ENCODE measurements at regions of chr3 and their contacts with region 1.

Region 1: DNA sequence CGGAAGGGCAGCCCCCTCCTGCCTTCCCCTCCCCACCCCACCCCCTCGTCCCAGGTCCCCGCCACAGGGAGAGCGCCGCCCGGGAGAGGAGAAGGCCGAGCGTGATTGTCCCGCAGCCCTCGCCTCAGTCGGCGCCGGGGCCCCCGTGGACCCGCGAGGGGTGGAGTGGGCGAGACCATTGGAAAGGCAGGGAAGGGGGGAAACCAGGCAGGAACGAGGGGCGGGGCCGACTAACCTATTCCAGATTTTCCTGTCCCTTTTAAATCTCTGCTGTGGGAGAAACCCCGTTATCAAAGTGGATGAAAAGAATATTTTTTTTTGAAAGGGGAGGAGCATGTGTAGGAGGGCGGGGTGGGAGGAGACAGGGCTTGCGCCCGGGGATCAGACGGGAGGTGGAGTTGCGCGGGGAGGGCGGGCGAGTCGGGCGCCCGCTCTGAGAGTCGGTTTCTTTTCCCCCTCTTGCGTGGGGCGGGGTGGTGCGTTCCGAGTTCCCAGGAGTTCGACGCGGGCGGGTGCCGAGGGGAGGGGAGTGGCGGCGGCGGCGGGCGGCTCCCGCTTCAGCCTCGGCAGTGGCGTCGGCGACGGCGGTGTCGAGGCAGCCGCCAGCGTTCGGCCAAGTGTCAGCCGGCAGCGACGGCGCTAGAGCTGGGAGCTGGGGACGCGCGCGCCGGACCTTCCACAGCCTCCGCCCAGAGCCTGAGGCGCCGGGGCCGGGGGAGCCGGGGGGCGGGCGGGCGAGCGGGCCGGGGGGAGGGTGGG is at the start of gene NECTIN3:
- DNase-seq: peak; percentile 59 to 89 (median 80)
- ATAC-seq: peak; percentile 96
- H3K4me3 ChIP-seq: peak within 1 kb of the TSS; percentile 76
- H3K4me3 Mint-ChIP-seq: peak within 1 kb of the TSS; percentile 90 to 98 (median 94)
- H3K27ac ChIP-seq: peak within 1 kb of the TSS; percentile 52
- H3K27ac Mint-ChIP-seq: peak within 1 kb of the TSS; percentile 63 to 91 (median 87)
- H3K4me1 ChIP-seq: peaks cover 9% of the 10 kb centered on the region in 2 donors
- H3K4me1 Mint-ChIP-seq: peaks cover 24 to 34% (median 26%) of the 10 kb centered on the region in 7 donors
- H3K27me3 ChIP-seq: peaks cover 0 to 6% of the 10 kb centered on the region in 2 donors
- H3K27me3 Mint-ChIP-seq: peaks cover 29 to 64% (median 36%) of the 10 kb centered on the region in 5 donors
- total RNA-seq, gene NECTIN3: 2.4 to 7.2 (median 4.6) TPM

Region 2: DNA sequence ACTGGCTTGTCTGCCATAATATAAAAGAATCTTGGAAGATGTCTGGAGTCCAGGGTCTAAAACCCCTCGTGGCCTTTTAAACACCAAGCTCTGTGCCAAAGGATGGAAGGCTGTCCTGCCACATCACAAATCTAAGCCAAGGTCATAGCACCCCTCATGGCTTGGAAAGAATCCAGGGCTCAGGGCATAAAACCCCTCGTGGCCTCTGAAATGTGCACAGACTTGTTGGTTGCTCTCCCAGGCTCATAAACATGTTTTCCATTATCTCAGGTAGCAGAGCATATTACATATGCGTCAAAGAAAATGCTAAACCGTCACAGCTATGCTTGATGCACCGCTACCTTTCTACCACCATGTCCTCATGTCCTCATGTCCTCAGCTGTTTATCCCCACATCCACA is 16.6 kb before region 1 on chr3:
- CTCF ChIA-PET with region 1: no interaction called
- POLR2A ChIA-PET with region 1: no interaction called
- intact Hi-C with region 1: loop called in 1 of 2 experiments (anchors 1 kb)
- DNase-seq: no peak
- ATAC-seq: no peak
- H3K4me3 ChIP-seq: no peak overlapping the region
- H3K4me3 Mint-ChIP-seq: no peak overlapping the region
- H3K27ac ChIP-seq: no peak overlapping the region
- H3K27ac Mint-ChIP-seq: no peak overlapping the region
- H3K4me1 ChIP-seq: no peaks in the 10 kb centered on the region
- H3K4me1 Mint-ChIP-seq: no peaks in the 10 kb centered on the region
- H3K27me3 ChIP-seq: no peaks in the 10 kb centered on the region
- H3K27me3 Mint-ChIP-seq: peaks cover 0 to 25% (median 17%) of the 10 kb centered on the region in 5 donors

Region 3: GRCh38 chr3:111087924-111088469 is 16.6 kb after region 1 on chr3:
- CTCF ChIA-PET with region 1: no interaction called
- POLR2A ChIA-PET with region 1: no interaction called
- intact Hi-C with region 1: no loop called
- DNase-seq: no peak
- ATAC-seq: no peak
- H3K4me3 ChIP-seq: no peak overlapping the region
- H3K4me3 Mint-ChIP-seq: no peak overlapping the region
- H3K27ac ChIP-seq: no peak overlapping the region
- H3K27ac Mint-ChIP-seq: no peak overlapping the region
- H3K4me1 ChIP-seq: no peaks in the 10 kb centered on the region
- H3K4me1 Mint-ChIP-seq: peaks cover 0 to 2% (median 0%) of the 10 kb centered on the region in 7 donors
- H3K27me3 ChIP-seq: no peaks in the 10 kb centered on the region
- H3K27me3 Mint-ChIP-seq: peaks cover 0 to 16% (median 0%) of the 10 kb centered on the region in 5 donors

Region 4: GRCh38 chr3:111311709-111312235 is 240.3 kb after region 1 on chr3:
- CTCF ChIA-PET with region 1: no interaction called
- POLR2A ChIA-PET with region 1: interaction called, 4 read pairs
- intact Hi-C with region 1: loop called (anchors 5 kb)
- DNase-seq: peak in 1 of 9 donors; percentile 19
- ATAC-seq: peak; percentile 62
- H3K4me3 ChIP-seq: no peak overlapping the region
- H3K4me3 Mint-ChIP-seq: peak overlapping the region in 8 of 10 donors; percentile 15 to 76 (median 56)
- H3K27ac ChIP-seq: peak overlapping the region; percentile 63
- H3K27ac Mint-ChIP-seq: peak overlapping the region in 7 of 9 donors; percentile 79 to 99 (median 92)
- H3K4me1 ChIP-seq: peaks cover 22 to 51% of the 10 kb centered on the region in 2 donors
- H3K4me1 Mint-ChIP-seq: peaks cover 0 to 57% (median 0%) of the 10 kb centered on the region in 7 donors
- H3K27me3 ChIP-seq: no peaks in the 10 kb centered on the region
- H3K27me3 Mint-ChIP-seq: no peaks in the 10 kb centered on the region

Region 5: GRCh38 chr3:111547631-111548030 is 476.2 kb after region 1 on chr3:
- CTCF ChIA-PET with region 1: no interaction called
- POLR2A ChIA-PET with region 1: no interaction called
- intact Hi-C with region 1: loop called (anchors 1 kb)
- DNase-seq: peak in 8 of 9 donors; percentile 44 to 88 (median 82)
- ATAC-seq: peak; percentile 89
- H3K4me3 ChIP-seq: peak overlapping the region; percentile 48
- H3K4me3 Mint-ChIP-seq: no peak overlapping the region
- H3K27ac ChIP-seq: peak overlapping the region; percentile 94
- H3K27ac Mint-ChIP-seq: no peak overlapping the region
- H3K4me1 ChIP-seq: peaks cover 66 to 81% of the 10 kb centered on the region in 2 donors
- H3K4me1 Mint-ChIP-seq: peaks cover 0 to 34% (median 4%) of the 10 kb centered on the region in 7 donors
- H3K27me3 ChIP-seq: no peaks in the 10 kb centered on the region
- H3K27me3 Mint-ChIP-seq: no peaks in the 10 kb centered on the region

Region 6: DNA sequence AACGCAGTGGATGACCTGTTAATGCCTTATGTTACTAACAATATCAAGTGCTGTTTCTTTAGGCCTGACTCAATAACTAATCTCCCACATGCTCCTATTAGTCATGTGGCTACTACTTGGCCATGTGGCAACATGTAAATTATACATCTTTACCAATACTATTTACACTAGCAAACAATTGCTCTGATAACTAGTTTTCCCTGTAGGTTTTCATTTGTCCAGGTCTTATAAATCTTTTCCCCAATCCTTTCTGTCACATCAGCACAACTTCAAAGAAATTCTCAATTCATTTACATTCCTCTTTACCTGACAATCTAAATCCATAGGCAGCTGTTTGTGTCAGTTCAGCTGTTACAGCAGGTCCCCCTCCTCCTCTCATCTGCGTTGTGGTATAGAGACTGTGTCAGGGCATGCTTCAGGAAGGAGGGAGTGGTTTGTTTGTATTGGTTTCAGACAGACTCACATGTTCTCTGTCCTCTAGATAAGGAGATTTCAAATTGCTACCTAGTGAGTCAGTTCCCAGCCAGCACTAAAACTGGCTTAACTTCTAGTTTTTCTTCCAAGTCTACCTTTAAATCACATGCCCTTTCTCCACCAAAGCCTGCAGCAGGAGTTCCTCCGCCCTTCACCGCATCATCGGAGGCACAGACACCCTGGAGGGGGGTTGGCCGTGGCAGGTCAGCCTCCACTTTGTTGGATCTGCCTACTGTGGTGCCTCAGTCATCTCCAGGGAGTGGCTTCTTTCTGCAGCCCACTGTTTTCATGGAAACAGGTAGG is 1003.5 kb after region 1 on chr3:
- CTCF ChIA-PET with region 1: no interaction called
- POLR2A ChIA-PET with region 1: no interaction called
- intact Hi-C with region 1: loop called (anchors 10 kb)
- DNase-seq: peak in 8 of 9 donors; percentile 29 to 60 (median 52)
- ATAC-seq: peak; percentile 88
- H3K4me3 ChIP-seq: no peak overlapping the region
- H3K4me3 Mint-ChIP-seq: peak overlapping the region; percentile 32 to 76 (median 56)
- H3K27ac ChIP-seq: peak overlapping the region; percentile 32
- H3K27ac Mint-ChIP-seq: peak overlapping the region; percentile 72 to 95 (median 85)
- H3K4me1 ChIP-seq: peaks cover 4 to 17% of the 10 kb centered on the region in 2 donors
- H3K4me1 Mint-ChIP-seq: peaks cover 17 to 57% (median 51%) of the 10 kb centered on the region in 7 donors
- H3K27me3 ChIP-seq: no peaks in the 10 kb centered on the region
- H3K27me3 Mint-ChIP-seq: peaks cover 0 to 3% (median 0%) of the 10 kb centered on the region in 5 donors

Measured in naive thymus-derived CD4-positive, alpha-beta T cell (primary cell).